ENCODE measurements at regions of chr1 and their contacts with region 1.

Region 1: DNA sequence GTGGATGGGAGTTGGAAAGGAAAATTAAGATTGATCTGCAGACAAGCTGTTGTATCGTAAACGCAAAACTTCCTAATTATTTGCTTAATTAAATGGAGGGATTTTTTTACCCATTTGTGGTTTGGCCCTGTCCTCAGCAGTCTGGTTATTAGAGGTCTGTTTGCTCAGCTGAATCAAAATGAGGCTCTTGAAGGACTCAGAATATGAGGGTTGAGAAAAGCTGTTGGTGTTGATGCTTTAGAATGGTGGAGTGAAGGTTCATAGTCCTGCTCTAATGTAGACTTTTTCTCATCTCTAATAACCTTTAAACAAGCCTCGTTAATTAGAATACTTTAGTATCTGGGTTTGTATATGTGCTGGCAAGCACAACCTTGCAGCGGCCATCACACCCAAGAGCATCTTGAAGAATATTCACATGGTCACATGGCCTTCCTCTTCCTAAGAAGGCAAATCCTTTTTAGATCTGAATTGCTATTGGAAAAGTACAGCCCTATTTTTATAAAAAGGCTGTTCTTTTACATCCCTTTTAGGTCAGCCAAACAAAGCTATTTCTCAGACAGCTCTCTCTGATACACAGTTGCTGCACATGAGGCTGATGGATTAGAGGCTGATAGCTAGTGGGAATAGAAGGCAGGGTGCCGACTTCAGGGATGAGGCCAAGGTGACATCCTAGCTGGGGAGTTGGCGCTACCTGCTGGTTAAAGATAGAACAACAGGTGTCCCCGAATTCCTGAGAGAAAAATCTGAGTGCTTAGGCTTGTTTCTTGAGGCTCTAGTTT is 53.8 kb downstream of the MACF1 start:
- H3K4me3 Mint-ChIP-seq: no peak overlapping the region
- H3K27ac Mint-ChIP-seq: no peak overlapping the region
- H3K4me1 Mint-ChIP-seq: no peaks in the 10 kb centered on the region
- H3K27me3 Mint-ChIP-seq: no peaks in the 10 kb centered on the region

Region 2: DNA sequence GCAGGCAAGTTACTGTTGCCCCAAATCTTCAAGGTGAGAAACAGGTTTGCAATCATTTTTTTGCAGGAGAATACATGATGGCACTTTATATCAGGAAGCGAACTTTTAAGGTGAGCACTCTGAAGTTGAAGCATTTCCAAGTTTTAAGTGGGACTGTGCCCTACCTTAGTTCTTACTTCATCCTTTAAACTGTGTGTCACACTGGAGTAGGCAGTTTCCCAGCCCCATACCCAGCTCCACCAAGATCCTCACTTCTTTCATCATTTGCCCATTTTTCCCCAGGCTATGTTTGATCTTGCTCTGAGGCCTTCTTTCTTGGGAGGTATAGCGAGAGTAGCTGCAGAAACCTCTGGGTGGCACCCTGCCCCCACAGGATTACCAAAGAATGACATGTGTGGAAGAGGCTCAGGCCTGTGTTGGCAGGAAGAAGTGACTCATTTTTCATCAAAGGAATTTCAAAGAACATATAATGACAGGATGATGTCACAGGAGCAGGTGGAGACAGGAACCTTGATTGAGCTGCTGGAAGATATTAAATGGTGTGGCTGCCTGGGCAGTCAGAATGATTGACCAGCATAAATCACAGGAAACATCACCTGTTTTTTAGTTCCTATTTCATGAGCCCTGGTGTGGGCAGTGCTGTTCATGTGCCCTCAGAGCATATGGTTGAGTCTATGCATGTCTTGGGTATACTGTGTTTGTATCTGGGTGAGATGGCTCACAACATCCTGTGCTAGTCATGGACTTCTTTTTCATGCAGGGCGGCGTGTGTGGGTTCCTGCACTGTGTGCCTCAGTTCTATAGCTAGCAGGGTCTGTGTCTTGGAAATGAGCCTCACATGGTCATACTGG is 74.6 kb before region 1 on chr1:
- intact Hi-C with region 1: no loop called
- H3K4me3 Mint-ChIP-seq: no peak overlapping the region
- H3K27ac Mint-ChIP-seq: no peak overlapping the region
- H3K4me1 Mint-ChIP-seq: peaks cover 45% of the 10 kb centered on the region
- H3K27me3 Mint-ChIP-seq: no peaks in the 10 kb centered on the region

Region 3: GRCh38 chr1:39196244-39197215 is 61.8 kb before region 1 on chr1:
- intact Hi-C with region 1: loop called (anchors 1 kb)
- H3K4me3 Mint-ChIP-seq: no peak overlapping the region
- H3K27ac Mint-ChIP-seq: no peak overlapping the region
- H3K4me1 Mint-ChIP-seq: peaks cover 54% of the 10 kb centered on the region
- H3K27me3 Mint-ChIP-seq: no peaks in the 10 kb centered on the region